PC-9 (cell line): ENCODE measurements at regions of chr12 and their contacts with region 1.

Region 1: DNA sequence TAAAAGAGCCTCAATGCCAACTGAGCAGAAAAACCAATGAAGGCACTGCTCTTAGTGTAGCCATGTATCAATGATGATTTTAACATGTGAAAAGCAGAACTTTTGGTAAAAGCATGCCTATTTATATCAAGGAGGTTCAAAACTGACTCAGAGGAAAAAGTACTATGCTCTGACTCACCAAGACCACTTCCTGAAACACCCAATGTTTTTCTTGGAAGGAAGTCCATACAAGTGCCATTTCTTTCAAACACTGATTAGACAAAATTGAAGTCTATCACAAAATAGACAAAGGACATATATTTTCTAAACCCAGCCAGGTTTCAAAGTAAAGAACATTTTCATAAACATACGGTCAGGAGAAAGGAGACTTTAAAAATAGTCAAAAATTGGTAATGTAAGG is 88.6 kb downstream of the EPS8 start:
- DNase-seq: peak in 1 of 2 experiments; percentile 74
- H3K4me3 ChIP-seq: no peak overlapping the region
- H3K27ac ChIP-seq: peak overlapping the region; percentile 58
- H3K4me1 ChIP-seq: peaks cover 27% of the 10 kb centered on the region
- H3K27me3 ChIP-seq: no peaks in the 10 kb centered on the region
- CTCF ChIP-seq: no peak

Region 2: GRCh38 chr12:15669256-15669948 is 31.2 kb before region 1 on chr12:
- CTCF ChIA-PET with region 1: no interaction called
- POLR2A ChIA-PET with region 1: no interaction called
- intact Hi-C with region 1: loop called (anchors 5 kb)
- DNase-seq: no peak
- H3K4me3 ChIP-seq: no peak overlapping the region
- H3K27ac ChIP-seq: no peak overlapping the region
- H3K4me1 ChIP-seq: no peaks in the 10 kb centered on the region
- H3K27me3 ChIP-seq: no peaks in the 10 kb centered on the region
- CTCF ChIP-seq: no peak

Region 3: DNA sequence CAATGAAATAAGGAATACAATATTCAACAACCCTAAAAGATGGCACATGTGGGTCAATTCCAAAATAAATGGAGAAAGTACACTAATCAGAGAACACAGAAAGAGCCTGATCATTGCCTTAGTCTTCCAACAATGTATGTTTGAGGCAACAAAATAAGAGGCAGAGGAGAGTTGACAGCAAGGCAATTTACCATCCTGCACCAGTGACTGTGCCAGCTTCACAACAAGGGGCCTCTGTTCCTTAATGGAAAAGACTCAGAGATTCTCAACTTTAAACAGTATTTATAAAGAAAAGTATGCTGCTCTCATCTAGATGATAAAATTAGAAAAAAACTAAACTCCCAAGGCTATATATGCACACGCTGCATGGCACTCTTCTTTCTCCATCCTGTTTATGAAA is 62.7 kb after region 1 on chr12:
- CTCF ChIA-PET with region 1: no interaction called
- POLR2A ChIA-PET with region 1: interaction called, 12 read pairs
- intact Hi-C with region 1: no loop called
- DNase-seq: no peak
- H3K4me3 ChIP-seq: no peak overlapping the region
- H3K27ac ChIP-seq: no peak overlapping the region
- H3K4me1 ChIP-seq: peaks cover 5% of the 10 kb centered on the region
- H3K27me3 ChIP-seq: no peaks in the 10 kb centered on the region
- CTCF ChIP-seq: no peak